ENCODE measurements at regions of chr15 and their contacts with region 1.

Region 1: GRCh38 chr15:51203797-51204196 is 109.1 kb upstream of the TNFAIP8L3 start:
- DNase-seq: no peak
- ATAC-seq: no peak
- H3K4me3 ChIP-seq: no peak overlapping the region
- H3K27ac ChIP-seq: no peak overlapping the region
- H3K4me1 ChIP-seq: peaks cover 0 to 1% of the 10 kb centered on the region in 2 donors
- H3K27me3 ChIP-seq: peaks cover 0 to 1% of the 10 kb centered on the region in 2 donors

Region 2: GRCh38 chr15:51144021-51144532 is 59.7 kb before region 1 on chr15:
- intact Hi-C with region 1: no loop called
- DNase-seq: no peak
- ATAC-seq: no peak
- H3K4me3 ChIP-seq: no peak overlapping the region
- H3K27ac ChIP-seq: no peak overlapping the region
- H3K4me1 ChIP-seq: no peaks in the 10 kb centered on the region
- H3K27me3 ChIP-seq: no peaks in the 10 kb centered on the region

Region 3: GRCh38 chr15:51267703-51268083 is 63.9 kb after region 1 on chr15:
- intact Hi-C with region 1: loop called in 1 of 2 experiments (anchors 10 kb)
- DNase-seq: peak in 1 of 2 donors; percentile 54
- ATAC-seq: no peak
- H3K4me3 ChIP-seq: peak overlapping the region; percentile 37 to 58
- H3K27ac ChIP-seq: no peak overlapping the region
- H3K4me1 ChIP-seq: no peaks in the 10 kb centered on the region
- H3K27me3 ChIP-seq: no peaks in the 10 kb centered on the region

Measured in aorta (tissue), 5 donors.